ENCODE measurements at regions of chr6 and their contacts with region 1.

Region 1: DNA sequence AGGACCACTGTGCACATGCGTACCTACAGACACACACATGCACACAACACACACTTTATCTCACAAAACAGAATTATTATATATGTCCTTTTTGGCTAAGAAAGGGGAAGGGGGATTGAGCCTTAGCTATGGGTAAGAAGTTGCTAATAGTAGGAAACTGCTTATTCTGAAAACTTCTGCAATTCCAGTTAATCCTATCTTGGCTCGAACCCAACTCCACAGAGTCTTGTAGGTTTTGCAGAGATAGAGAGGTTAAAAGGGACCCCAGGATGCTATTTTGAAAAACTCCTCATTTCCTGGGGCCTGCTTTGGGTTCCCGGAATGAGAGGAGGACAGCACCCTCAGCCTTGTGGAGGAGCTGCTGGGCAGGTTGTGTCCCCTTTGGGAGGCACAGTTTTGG is 233.8 kb downstream of the CLIC5 start:
- DNase-seq: no peak
- H3K4me3 Mint-ChIP-seq: no peak overlapping the region
- H3K27ac Mint-ChIP-seq: no peak overlapping the region
- H3K4me1 Mint-ChIP-seq: no peaks in the 10 kb centered on the region
- H3K27me3 Mint-ChIP-seq: no peaks in the 10 kb centered on the region

Region 2: DNA sequence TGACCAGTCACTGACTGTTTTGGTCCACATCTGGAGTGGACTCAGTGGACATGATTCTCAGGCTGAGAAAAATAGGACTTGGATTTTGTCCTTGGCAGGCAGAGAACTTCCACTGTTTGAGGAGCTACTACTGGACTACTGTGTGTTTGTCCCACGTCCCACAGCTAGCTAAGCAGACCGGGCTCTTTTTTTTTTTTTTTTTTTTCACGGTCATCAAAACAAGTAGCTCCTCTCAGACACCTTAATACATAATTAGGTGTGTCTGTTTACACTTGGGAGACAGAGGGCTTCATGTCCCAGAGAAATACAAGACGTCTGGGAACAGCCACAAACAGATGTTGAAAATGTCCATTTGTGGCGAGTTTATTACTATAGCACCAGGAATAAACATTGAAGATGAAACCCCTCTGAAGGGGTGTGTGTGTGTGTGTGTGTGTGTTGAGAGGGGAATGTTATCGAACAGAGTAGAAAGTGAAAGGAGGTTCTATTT is 249.1 kb before region 1 on chr6:
- CTCF ChIA-PET with region 1: no interaction called
- POLR2A ChIA-PET with region 1: no interaction called
- DNase-seq: no peak
- H3K4me3 Mint-ChIP-seq: no peak overlapping the region
- H3K27ac Mint-ChIP-seq: no peak overlapping the region
- H3K4me1 Mint-ChIP-seq: peaks cover 10% of the 10 kb centered on the region
- H3K27me3 Mint-ChIP-seq: no peaks in the 10 kb centered on the region

Region 3: DNA sequence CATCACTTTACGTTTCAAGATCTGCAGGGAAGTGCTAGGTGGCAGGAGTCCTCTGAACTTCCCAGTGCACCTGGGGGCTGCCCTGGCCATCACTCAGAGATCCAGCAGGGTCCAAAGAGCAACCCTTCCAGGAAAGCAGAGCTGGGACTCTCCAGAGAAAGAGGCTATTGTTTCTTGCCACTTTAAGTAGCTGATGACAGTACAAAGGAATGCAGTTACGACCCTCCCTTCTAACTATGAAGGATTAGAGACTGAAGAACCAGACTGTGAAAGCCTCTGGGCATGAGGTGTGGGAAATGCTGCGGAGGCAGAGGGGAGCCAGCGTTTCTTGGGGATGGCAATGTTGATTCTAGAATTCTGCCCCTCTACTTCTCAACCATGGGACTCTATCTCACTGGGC is 215.0 kb before region 1 on chr6:
- CTCF ChIA-PET with region 1: no interaction called
- POLR2A ChIA-PET with region 1: interaction called, 11 read pairs
- DNase-seq: no peak
- H3K4me3 Mint-ChIP-seq: no peak overlapping the region
- H3K27ac Mint-ChIP-seq: no peak overlapping the region
- H3K4me1 Mint-ChIP-seq: peaks cover 9% of the 10 kb centered on the region
- H3K27me3 Mint-ChIP-seq: peaks cover 4% of the 10 kb centered on the region

Measured in activated CD4-positive, alpha-beta T cell treated with anti-CD3 and anti-CD28 coated beads, Interleukin-2, amount 10 ng/mL, durations not matched to agents 7 days and 5 days (primary cell).